ENCODE measurements at regions of chr4 and their contacts with region 1.

Region 1: DNA sequence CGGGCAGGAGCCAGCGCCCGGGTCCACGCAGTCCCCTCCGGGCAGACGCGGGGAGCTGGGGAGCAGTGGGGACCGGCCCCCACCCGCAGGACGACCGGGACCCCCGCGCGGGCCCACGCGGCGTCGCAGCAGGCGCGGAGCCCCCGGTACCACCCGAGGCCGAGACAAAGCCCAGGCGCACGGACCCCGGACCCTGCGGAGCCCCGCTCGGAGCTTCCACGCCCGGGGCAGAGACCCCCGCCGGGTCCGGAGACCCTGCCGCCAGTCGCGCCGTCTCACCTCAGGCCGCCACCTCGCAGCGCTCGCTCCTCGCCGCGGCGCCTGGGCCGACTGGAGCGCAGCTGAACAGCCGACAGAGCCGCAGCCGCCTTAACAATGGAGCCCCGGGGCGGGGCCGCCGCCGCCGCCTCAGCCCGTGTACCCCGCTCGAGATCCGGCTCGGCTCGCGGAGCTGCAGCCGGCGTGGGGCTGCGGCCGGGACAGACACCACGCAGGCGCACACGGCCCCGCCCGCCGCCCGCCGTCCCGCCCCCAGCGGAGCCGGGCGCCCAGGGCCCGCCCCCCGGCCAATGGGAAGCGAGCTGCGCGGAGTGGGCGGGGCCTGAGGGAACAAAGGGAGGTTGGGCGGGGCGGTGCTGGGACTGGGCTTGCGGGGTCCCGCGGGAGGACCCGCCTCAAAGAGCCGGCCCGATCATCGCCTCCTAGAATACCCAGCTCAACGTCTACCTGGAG is at the start of gene AFAP1:
- DNase-seq: peak; percentile 70 to 94 (median 86)
- H3K4me3 ChIP-seq: peak within 1 kb of the TSS; percentile 59 to 97 (median 81)
- H3K27ac ChIP-seq: peak within 1 kb of the TSS in 45 of 59 donors; percentile 8 to 86 (median 63)
- H3K27me3 ChIP-seq: no peaks in the 10 kb centered on the region
- CTCF ChIP-seq: peak in 7 of 56 donors; percentile 5 to 32 (median 17)
- total RNA-seq, gene AFAP1: 16.0 to 44.2 (median 28.5) TPM

Region 2: GRCh38 chr4:7843831-7844593 is 95.5 kb before region 1 on chr4:
- intact Hi-C with region 1: loop called in 1 of 2 experiments (anchors 10 kb)
- DNase-seq: peak in 9 of 10 donors; percentile 55 to 72 (median 66)
- H3K4me3 ChIP-seq: no peak overlapping the region
- H3K27ac ChIP-seq: peak overlapping the region in 4 of 59 donors; percentile 4 to 19 (median 17)
- H3K27me3 ChIP-seq: no peaks in the 10 kb centered on the region
- CTCF ChIP-seq: peak; percentile 35 to 75 (median 60)

Region 3: DNA sequence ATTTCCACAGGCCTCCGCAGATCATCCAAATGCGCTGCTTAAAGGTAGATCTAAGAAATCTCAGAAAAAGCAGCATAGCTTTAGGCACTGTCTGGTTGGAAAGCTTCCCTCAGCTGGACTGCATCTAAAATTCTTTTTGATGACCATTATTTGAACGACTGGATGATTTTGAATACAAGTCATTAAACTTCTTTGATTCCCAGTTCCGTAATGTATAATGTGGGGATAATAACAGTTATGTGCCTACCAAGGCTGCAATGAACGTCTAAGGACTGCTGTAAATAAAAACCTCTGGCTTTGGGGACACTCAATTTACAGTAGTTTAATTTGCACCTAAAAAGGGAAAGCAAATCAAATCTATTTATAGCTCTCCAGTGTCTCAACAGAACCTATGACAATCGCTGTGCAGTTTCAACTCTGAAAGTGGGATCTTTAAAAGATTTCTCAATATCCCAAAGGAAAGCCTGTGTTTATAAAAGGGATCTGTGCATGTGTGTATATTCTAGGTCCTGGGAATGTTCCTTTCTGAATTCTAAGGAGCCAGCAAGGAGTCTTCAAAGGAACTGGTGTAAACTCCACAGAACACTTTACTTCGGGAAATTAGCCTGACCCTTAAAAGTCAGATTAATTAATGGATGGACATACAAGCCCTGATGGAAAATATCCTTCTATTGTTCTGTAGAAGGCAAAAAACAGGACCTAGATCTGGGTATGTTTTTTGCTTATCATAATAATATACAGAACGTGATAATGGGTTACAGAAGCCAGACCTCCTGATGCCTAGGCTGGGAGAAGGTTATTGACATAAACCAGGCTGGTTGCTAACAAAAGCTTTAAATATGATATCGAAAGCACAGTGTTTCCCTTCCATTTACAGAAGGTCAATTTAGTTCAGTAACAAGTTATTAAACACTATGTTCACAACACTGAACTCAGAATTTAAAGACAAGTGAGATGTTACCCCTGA is 53.3 kb before region 1 on chr4:
- intact Hi-C with region 1: no loop called
- DNase-seq: no peak
- H3K4me3 ChIP-seq: no peak overlapping the region
- H3K27ac ChIP-seq: peak overlapping the region in 7 of 59 donors; percentile 10 to 33 (median 20)
- H3K27me3 ChIP-seq: no peaks in the 10 kb centered on the region
- CTCF ChIP-seq: no peak

Region 4: GRCh38 chr4:7981738-7982394 is 42.3 kb after region 1 on chr4:
- intact Hi-C with region 1: loop called in 1 of 2 experiments (anchors 5 kb)
- DNase-seq: no peak
- H3K4me3 ChIP-seq: no peak overlapping the region
- H3K27ac ChIP-seq: no peak overlapping the region
- H3K27me3 ChIP-seq: no peaks in the 10 kb centered on the region
- CTCF ChIP-seq: no peak

Region 5: DNA sequence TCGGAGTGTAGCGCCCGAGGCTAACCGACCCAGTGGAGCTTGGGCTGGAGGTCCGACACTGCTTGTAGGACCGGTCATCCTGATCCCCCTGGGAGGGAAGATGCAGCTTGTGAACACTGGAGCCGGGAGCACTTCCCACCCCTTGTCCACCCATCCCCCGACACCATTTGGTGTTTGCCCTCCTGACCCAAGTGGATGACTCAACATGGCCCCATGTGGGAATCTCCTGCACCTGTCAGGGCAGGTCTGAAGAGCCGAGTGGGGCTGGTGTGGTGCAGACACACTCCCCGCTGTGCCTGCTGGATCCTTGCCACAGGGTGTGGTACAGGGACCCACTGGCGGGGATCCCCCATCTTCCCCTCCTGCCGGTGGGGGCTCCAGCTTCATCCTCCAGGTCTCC is 90.1 kb after region 1 on chr4:
- intact Hi-C with region 1: no loop called
- DNase-seq: no peak
- H3K4me3 ChIP-seq: no peak overlapping the region
- H3K27ac ChIP-seq: peak overlapping the region in 4 of 59 donors; percentile 6 to 44 (median 30)
- H3K27me3 ChIP-seq: no peaks in the 10 kb centered on the region
- CTCF ChIP-seq: no peak

Region 6: DNA sequence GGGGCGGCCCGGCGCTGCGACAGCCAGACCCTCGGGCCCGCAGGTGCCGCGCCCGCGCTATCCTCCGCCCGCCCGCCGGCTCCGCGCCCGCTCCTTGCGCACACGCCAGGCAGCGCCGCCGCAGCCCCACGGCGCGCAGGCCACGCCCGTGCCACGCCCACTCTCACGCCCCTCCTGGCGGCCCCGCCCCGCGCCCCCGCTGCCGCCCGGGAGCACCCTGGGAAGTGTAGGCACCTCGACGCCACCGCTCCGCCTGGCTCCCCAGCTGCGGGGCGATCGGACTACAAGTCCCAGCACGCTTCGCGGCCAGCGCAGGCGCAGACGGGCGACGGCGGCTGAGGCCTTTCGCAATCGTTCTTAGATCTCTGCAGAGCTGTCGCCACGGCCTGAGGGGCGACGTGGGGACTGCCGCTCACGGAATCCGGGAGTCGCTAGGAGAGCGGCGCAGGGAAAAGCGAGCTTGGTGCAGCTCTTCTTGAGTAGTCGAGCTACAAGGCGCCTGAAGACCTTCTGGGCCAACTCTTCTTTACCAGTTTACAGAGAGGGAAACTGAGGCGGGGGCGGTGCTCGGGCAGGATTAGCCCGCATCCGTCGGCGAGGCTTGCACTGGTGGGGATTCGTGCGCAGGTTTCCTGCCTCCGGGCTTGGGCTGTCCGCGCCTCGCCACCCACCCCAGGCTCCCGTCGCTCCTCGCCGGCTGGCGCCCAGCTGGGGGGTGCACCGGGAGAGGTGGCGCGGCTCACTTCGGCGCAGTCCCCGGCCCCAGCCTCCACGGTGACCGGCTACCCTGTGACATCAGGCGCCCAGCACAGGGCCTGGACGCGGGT is 219.4 kb after region 1 on chr4 and contains the start of gene ABLIM2:
- intact Hi-C with region 1: loop called in 1 of 2 experiments (anchors 10 kb)
- DNase-seq: peak; percentile 96 to 100 (median 98)
- H3K4me3 ChIP-seq: peak within 1 kb of the TSS; percentile 56 to 99 (median 92)
- H3K27ac ChIP-seq: peak within 1 kb of the TSS in 58 of 59 donors; percentile 1 to 94 (median 87)
- H3K27me3 ChIP-seq: no peaks in the 10 kb centered on the region
- CTCF ChIP-seq: peak in 20 of 56 donors; percentile 7 to 50 (median 28)
- total RNA-seq, gene ABLIM2: 43.2 to 185 (median 130) TPM